ENCODE measurements at regions of chrX and their contacts with region 1.

Region 1: DNA sequence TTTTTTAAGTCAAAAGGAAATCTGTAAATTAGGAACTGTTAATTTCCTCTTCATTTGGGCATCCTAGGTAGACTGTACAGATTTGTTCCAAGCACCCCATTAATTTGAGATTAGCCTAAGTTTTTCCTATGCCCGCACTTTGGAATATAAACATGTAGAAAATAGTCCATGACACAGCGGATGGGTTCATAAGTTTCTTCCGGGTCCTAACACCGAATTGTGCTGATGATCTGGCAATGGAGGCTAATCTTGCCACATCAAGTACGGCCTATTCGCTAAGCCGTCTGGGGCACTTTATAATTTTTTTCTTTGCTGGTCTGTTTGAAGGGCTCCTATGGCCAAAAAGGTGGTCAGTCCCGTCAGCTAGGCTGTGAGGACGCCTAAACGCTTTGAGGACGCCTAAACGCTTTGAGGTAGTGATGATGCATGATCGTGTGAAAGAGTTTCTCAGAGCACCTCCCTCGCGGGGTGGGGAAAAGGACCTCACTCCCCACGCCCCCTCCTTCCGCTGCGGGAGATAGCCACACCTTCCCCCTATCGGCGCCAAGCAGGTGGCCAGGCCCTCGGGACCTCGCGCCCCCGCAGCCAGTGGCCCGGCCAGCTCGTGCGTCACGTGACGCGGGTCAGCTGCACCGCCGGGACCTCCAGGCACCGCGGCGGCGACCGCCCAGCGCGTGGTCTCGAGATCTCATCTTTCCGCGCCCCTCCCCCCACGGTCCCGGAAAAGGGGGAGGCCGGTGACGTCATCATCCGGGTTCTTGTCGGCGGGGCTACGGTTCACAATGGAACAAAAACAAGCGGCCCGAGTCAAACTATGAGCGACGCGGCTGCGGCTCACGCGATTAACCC is 977 bp upstream of the USP9X start:
- DNase-seq: peak; percentile 96
- ATAC-seq: peak; percentile 67
- H3K4me3 Mint-ChIP-seq: peak overlapping the region; percentile 80
- H3K27ac Mint-ChIP-seq: peak overlapping the region; percentile 99
- H3K4me1 Mint-ChIP-seq: peaks cover 14% of the 10 kb centered on the region
- H3K27me3 Mint-ChIP-seq: no peaks in the 10 kb centered on the region

Region 2: DNA sequence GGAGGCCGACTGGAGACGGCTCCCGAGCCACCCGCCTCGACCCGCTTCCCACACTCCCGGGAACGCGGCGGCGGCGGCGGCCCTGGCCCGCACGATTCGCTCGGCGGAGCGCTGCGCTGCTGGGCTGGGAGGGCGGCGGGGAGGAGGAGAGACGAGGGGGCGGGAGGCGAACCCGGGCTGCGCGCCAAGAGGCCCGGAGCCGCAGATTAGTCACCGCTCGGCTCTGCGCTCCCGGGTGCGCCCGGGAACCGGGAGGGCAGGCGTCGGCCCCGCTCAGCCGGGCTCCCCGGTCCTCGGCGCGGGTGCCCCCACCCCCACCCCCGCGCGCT is 975.3 kb before region 1 on chrX:
- CTCF ChIA-PET with region 1: no interaction called
- POLR2A ChIA-PET with region 1: no interaction called
- intact Hi-C with region 1: loop called in 1 of 2 experiments (anchors 10 kb)
- DNase-seq: peak; percentile 83
- ATAC-seq: peak; percentile 60
- H3K4me3 Mint-ChIP-seq: peak overlapping the region; percentile 46
- H3K27ac Mint-ChIP-seq: no peak overlapping the region
- H3K4me1 Mint-ChIP-seq: peaks cover 9% of the 10 kb centered on the region
- H3K27me3 Mint-ChIP-seq: peaks cover 4% of the 10 kb centered on the region

Region 3: GRCh38 chrX:40580537-40581335 is 503.5 kb before region 1 on chrX and contains the start of gene ATP6AP2:
- CTCF ChIA-PET with region 1: no interaction called
- POLR2A ChIA-PET with region 1: no interaction called
- intact Hi-C with region 1: loop called in 1 of 2 experiments (anchors 1 kb)
- DNase-seq: peak; percentile 94
- ATAC-seq: peak; percentile 98
- H3K4me3 Mint-ChIP-seq: peak within 1 kb of the TSS; percentile 77
- H3K27ac Mint-ChIP-seq: peak within 1 kb of the TSS; percentile 86
- H3K4me1 Mint-ChIP-seq: peaks cover 29% of the 10 kb centered on the region
- H3K27me3 Mint-ChIP-seq: no peaks in the 10 kb centered on the region
- total RNA-seq, gene ATP6AP2: 39.9 to 52.2 TPM

Region 4: DNA sequence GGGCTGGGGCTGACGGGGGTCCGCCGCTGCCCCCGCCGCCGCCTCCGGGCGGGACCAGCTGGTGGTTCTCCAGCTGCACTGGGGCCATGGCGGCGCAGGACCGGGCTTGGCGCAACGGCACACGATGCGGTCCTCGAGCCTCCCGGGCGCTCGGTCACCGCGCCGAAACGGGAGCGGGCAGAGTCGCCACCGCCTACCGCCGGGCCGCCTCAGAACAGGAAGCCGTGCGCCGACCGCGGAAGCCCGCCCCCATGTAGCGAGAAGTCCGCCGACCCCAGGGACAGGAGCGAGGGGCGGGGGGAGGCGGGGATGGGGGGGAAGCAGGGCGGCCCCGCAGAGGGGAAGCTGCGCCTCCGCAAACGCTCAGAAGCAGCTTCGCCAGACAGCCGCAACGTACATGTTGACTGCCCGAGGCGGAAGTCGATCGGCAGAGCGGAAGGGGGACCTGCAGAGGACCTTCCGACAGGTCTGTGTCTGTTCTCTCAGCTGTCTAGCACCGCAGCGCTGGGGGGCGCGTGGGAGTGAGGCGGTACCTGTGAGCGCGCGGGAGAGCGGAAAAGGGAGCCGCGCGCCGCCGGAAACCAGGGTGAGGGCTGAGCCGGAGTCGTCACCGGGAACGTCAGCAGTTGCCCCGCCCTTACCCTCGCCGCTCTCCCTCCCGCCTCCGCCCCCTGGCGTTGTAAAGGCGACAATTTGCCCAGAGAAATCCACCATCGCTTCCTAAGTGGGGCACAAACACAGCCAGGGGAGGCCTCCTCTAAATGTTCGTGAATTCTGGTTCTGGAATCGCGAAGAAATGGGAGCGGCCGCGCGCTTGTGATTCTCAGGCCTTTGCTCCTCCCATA is 348.7 kb before region 1 on chrX and contains the start of gene MED14:
- CTCF ChIA-PET with region 1: no interaction called
- POLR2A ChIA-PET with region 1: interaction called, 5 read pairs
- intact Hi-C with region 1: loop called in 1 of 2 experiments (anchors 1 kb)
- DNase-seq: peak; percentile 95
- ATAC-seq: peak; percentile 93
- H3K4me3 Mint-ChIP-seq: peak within 1 kb of the TSS; percentile 84
- H3K27ac Mint-ChIP-seq: peak within 1 kb of the TSS; percentile 96
- H3K4me1 Mint-ChIP-seq: peaks cover 43% of the 10 kb centered on the region
- H3K27me3 Mint-ChIP-seq: no peaks in the 10 kb centered on the region
- total RNA-seq, gene MED14: 51.0 to 60.1 TPM

Region 5: DNA sequence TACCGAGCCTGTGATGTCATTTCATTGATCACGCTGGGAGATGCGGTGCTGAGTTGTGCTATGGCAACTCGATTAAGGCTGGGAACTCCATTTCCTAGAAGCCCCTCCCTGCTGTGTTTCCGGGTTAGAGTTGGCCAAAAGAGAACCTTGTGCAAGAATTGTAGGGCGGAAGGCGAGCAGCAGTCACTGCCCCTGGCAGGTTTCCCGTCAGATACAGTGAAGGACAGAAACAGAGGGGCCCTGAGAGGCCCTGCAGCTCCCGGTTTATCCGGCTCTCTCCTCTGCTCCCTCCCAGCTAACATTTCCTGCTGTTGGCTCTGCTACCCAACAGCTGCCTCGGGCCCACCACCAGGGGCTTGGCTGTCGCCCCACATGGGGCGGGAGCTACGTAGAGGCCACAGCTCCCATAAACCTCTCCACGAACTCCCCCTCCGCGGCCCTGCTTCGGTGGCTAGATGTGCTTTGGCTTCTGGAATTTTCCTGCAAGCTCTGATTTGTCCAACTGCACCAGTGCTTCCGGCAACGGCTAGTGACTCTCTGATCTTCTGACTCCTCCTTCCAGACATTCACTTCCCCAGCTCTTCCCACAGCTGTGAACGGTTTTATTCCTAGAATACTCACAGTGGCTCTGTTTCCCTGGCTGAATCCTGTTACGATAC is 74.0 kb before region 1 on chrX:
- CTCF ChIA-PET with region 1: no interaction called
- POLR2A ChIA-PET with region 1: no interaction called
- intact Hi-C with region 1: loop called (anchors 2 to 5 kb)
- DNase-seq: peak; percentile 65
- ATAC-seq: peak; percentile 84
- H3K4me3 Mint-ChIP-seq: peak overlapping the region; percentile 56
- H3K27ac Mint-ChIP-seq: peak overlapping the region; percentile 83
- H3K4me1 Mint-ChIP-seq: peaks cover 22% of the 10 kb centered on the region
- H3K27me3 Mint-ChIP-seq: no peaks in the 10 kb centered on the region

Region 6: GRCh38 chrX:41022579-41022978 is 61.7 kb before region 1 on chrX:
- CTCF ChIA-PET with region 1: no interaction called
- POLR2A ChIA-PET with region 1: no interaction called
- intact Hi-C with region 1: no loop called
- DNase-seq: no peak
- ATAC-seq: no peak
- H3K4me3 Mint-ChIP-seq: no peak overlapping the region
- H3K27ac Mint-ChIP-seq: no peak overlapping the region
- H3K4me1 Mint-ChIP-seq: no peaks in the 10 kb centered on the region
- H3K27me3 Mint-ChIP-seq: no peaks in the 10 kb centered on the region

Region 7: DNA sequence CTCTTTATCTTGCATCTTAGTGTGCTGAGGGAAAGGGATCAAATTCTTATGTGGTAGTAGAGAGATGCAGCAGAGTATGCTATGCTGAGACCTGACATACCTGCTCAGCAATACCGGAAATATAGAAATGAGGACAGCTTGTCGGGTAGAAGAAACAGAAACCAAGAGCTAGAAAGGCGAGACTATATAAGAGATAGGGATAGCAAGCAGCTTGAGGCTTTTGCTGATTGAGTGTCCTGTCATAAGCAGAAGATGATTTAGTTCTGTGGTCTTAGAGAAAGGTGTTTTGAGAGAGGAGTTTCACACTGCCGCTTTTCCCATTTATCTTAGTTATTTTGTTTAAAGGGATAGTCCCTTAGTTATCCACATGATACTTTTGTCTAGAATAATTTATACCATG is 32.7 kb after region 1 on chrX:
- CTCF ChIA-PET with region 1: interaction called, 4 read pairs
- POLR2A ChIA-PET with region 1: interaction called, 10 read pairs
- intact Hi-C with region 1: loop called (anchors 1 to 2 kb)
- DNase-seq: no peak
- ATAC-seq: peak; percentile 81
- H3K4me3 Mint-ChIP-seq: peak overlapping the region; percentile 49
- H3K27ac Mint-ChIP-seq: peak overlapping the region; percentile 72
- H3K4me1 Mint-ChIP-seq: peaks cover 76% of the 10 kb centered on the region
- H3K27me3 Mint-ChIP-seq: no peaks in the 10 kb centered on the region